ENCODE measurements at regions of chr17 and their contacts with region 1.

Region 1: DNA sequence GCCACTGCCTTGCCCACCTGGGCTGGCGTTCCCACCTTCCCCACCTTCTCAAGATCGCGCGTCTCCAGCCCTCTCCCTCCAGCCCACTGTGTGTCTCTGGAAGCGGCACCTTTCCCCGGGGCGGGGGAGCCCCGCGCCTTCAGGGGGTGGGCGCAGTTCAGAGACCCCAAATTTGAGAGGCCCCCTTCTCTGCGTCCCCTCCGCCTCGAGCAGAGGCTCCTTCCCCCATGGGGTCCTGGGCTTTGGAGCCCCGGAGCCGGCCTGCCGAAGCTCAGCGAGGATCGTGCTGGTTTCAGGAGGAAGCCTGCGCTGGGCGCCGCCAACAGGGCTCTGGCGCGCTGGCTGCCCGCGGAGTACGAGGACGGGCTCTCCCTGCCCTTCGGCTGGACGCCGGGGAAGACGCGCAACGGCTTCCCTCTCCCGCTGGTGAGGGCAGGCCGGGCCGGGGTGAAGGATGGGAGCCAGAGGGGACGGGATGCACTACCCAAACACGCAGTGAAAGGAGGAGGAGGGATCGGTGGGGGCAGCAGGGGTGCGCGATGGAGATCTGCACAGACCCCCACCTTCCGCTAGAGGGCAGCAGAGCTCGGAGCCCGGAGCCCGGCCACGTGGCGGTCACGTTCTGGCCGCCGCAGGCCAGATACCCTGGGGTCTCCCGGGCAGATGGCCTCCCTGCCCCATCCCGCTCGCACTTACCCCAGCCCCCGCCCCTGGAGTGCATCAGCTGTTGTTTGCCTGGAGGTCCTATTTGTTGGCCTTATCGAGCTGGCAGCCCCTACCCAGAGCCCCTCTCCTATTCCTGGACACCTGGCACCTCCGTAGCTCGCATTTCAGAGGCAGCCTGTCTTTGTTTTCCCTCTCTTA is 11.1 kb downstream of the LPO start:
- DNase-seq: peak; percentile 87
- ATAC-seq: peak; percentile 98
- H3K4me3 ChIP-seq: peak overlapping the region in 4 of 5 experiments; percentile 60 to 66 (median 62)
- H3K4me3 Mint-ChIP-seq: peak overlapping the region; percentile 92
- H3K27ac ChIP-seq: no peak overlapping the region
- H3K27ac Mint-ChIP-seq: peak overlapping the region; percentile 68
- H3K4me1 ChIP-seq: peaks cover 14 to 18% of the 10 kb centered on the region in 2 donors
- H3K4me1 Mint-ChIP-seq: peaks cover 19% of the 10 kb centered on the region
- H3K27me3 ChIP-seq: peaks cover 0 to 36% (median 8%) of the 10 kb centered on the region in 4 experiments
- H3K27me3 Mint-ChIP-seq: peaks cover 17% of the 10 kb centered on the region
- CTCF ChIP-seq: peak; percentile 99

Region 2: DNA sequence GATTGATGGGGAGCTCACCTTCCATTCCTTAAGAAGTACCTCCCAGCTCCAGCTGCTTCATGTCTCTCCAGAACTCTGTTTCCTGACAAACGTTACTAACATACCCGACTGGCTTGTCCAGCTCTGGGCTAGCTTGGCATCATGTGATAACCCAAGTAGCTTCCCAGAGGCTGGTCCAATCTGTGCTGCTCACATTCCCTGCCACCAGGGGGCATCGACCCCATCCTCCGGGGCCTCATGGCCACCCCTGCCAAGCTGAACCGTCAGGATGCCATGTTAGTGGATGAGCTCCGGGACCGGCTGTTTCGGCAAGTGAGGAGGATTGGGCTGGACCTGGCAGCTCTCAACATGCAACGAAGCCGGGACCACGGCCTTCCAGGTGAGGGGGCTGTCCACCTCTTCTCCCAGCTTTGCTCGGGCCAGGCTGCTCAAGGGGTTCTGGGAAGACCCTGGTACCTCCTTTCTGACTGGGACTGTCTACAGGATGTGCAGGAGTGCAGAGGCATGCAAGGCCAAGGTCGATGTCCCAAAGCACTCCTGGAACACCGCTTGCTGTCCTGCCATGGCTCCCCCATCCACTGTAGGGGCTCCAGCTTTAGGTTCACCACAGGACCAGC is 49.4 kb before region 1 on chr17:
- CTCF ChIA-PET with region 1: interaction called, 29 read pairs
- POLR2A ChIA-PET with region 1: no interaction called
- intact Hi-C with region 1: loop called (anchors 1 kb)
- DNase-seq: peak; percentile 64
- ATAC-seq: peak; percentile 70
- H3K4me3 ChIP-seq: no peak overlapping the region
- H3K4me3 Mint-ChIP-seq: no peak overlapping the region
- H3K27ac ChIP-seq: no peak overlapping the region
- H3K27ac Mint-ChIP-seq: no peak overlapping the region
- H3K4me1 ChIP-seq: peaks cover 0 to 5% of the 10 kb centered on the region in 2 donors
- H3K4me1 Mint-ChIP-seq: peaks cover 3% of the 10 kb centered on the region
- H3K27me3 ChIP-seq: peaks cover 0 to 2% (median 0%) of the 10 kb centered on the region in 4 experiments
- H3K27me3 Mint-ChIP-seq: peaks cover 33% of the 10 kb centered on the region
- CTCF ChIP-seq: peak; percentile 77

Region 3: DNA sequence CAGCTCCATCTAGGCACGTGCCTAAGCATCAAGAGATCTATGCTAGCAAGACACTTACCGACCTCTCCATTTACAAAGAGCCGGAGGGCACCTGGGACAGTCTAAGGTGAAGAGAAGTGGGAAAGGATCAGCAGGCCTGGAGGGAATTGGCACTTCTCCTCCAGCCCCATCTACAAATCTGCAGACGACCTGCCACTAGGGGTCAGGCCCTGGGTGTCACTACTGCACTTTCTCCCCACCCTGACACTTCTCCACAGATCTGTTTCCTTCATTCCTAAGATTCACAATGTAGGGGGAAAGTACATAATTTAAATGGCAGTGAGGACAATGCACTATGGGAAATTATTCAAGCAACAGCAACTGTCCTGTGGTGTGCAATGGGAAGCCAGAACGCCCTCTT is 38.6 kb before region 1 on chr17:
- CTCF ChIA-PET with region 1: interaction called, 58 read pairs
- POLR2A ChIA-PET with region 1: no interaction called
- intact Hi-C with region 1: no loop called
- DNase-seq: no peak
- ATAC-seq: no peak
- H3K4me3 ChIP-seq: no peak overlapping the region
- H3K4me3 Mint-ChIP-seq: no peak overlapping the region
- H3K27ac ChIP-seq: no peak overlapping the region
- H3K27ac Mint-ChIP-seq: no peak overlapping the region
- H3K4me1 ChIP-seq: no peaks in the 10 kb centered on the region
- H3K4me1 Mint-ChIP-seq: peaks cover 1% of the 10 kb centered on the region
- H3K27me3 ChIP-seq: no peaks in the 10 kb centered on the region
- H3K27me3 Mint-ChIP-seq: no peaks in the 10 kb centered on the region
- CTCF ChIP-seq: no peak

Region 4: GRCh38 chr17:58219001-58219788 is 30.3 kb before region 1 on chr17 and contains the start of gene MKS1:
- CTCF ChIA-PET with region 1: interaction called, 58 read pairs
- POLR2A ChIA-PET with region 1: no interaction called
- intact Hi-C with region 1: loop called (anchors 1 kb)
- DNase-seq: peak; percentile 95
- ATAC-seq: peak; percentile 97
- H3K4me3 ChIP-seq: peak within 1 kb of the TSS; percentile 38 to 84 (median 68)
- H3K4me3 Mint-ChIP-seq: peak within 1 kb of the TSS; percentile 94
- H3K27ac ChIP-seq: peak within 1 kb of the TSS; percentile 70 to 86
- H3K27ac Mint-ChIP-seq: peak within 1 kb of the TSS; percentile 83
- H3K4me1 ChIP-seq: peaks cover 10 to 19% of the 10 kb centered on the region in 2 donors
- H3K4me1 Mint-ChIP-seq: peaks cover 34% of the 10 kb centered on the region
- H3K27me3 ChIP-seq: no peaks in the 10 kb centered on the region
- H3K27me3 Mint-ChIP-seq: peaks cover 2% of the 10 kb centered on the region
- CTCF ChIP-seq: peak; percentile 75
- total RNA-seq, gene MKS1: 16.3 and 19.6 TPM in 2 replicates

Region 5: GRCh38 chr17:58232707-58233156 is 16.8 kb before region 1 on chr17:
- CTCF ChIA-PET with region 1: interaction called, 26 read pairs
- POLR2A ChIA-PET with region 1: no interaction called
- intact Hi-C with region 1: loop called (anchors 1 kb)
- DNase-seq: peak; percentile 64
- ATAC-seq: peak; percentile 62
- H3K4me3 ChIP-seq: peak overlapping the region in 1 of 5 experiments; percentile 2
- H3K4me3 Mint-ChIP-seq: peak overlapping the region; percentile 78
- H3K27ac ChIP-seq: peak overlapping the region; percentile 69 to 81
- H3K27ac Mint-ChIP-seq: peak overlapping the region; percentile 95
- H3K4me1 ChIP-seq: peaks cover 20 to 25% of the 10 kb centered on the region in 2 donors
- H3K4me1 Mint-ChIP-seq: peaks cover 32% of the 10 kb centered on the region
- H3K27me3 ChIP-seq: peaks cover 0 to under 1% (median 0%) of the 10 kb centered on the region in 4 experiments
- H3K27me3 Mint-ChIP-seq: peaks cover 15% of the 10 kb centered on the region
- CTCF ChIP-seq: no peak

Region 6: GRCh38 chr17:58238139-58238634 is 11.3 kb before region 1 on chr17 and contains the start of gene LPO:
- CTCF ChIA-PET with region 1: interaction called, 11 read pairs
- POLR2A ChIA-PET with region 1: no interaction called
- intact Hi-C with region 1: loop called (anchors 1 kb)
- DNase-seq: no peak
- ATAC-seq: no peak
- H3K4me3 ChIP-seq: no peak within 1 kb of the TSS
- H3K4me3 Mint-ChIP-seq: no peak within 1 kb of the TSS
- H3K27ac ChIP-seq: no peak within 1 kb of the TSS
- H3K27ac Mint-ChIP-seq: no peak within 1 kb of the TSS
- H3K4me1 ChIP-seq: peaks cover 5 to 11% of the 10 kb centered on the region in 2 donors
- H3K4me1 Mint-ChIP-seq: peaks cover 15% of the 10 kb centered on the region
- H3K27me3 ChIP-seq: peaks cover 0 to 24% (median 6%) of the 10 kb centered on the region in 4 experiments
- H3K27me3 Mint-ChIP-seq: peaks cover 46% of the 10 kb centered on the region
- CTCF ChIP-seq: no peak
- total RNA-seq, gene LPO: not detected in 2 replicates

Region 7: DNA sequence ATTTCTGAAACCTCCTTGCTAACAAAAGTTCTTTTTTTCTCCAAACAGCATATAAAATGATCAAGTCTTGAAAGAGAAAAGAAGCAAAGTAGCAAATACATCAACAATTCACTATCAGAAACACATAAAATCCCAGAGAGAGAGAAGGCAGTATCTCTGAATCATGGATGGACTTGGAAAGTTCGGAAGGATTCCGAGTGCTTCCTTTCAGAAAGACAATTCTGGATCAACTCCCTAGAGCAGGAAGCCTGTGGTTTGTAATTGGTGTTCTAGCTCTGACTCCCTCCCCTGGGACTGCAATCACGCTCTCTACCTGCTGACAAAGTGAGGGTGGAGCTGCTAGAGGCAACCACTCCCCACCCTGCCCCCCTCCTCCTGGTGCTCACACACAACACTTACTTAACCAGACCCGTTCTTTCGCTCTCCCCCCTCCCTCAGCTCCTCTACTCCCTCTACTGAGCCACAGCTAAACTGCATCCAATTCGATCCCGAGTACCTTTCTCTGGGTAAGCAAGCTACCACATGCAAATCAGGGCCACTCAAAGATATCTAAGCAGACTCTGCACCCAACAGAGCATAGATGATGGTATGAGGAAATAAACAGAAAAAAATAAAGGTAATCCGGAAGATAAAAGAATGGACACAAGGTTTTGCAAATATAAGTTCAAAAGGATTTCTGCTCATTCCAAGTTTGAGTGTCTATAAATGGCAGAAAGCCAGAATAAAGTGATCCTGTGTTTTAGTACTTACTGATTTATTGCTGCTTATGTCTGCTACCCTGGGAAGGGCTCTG is 168.0 kb after region 1 on chr17 and contains the start of gene RNF43:
- CTCF ChIA-PET with region 1: interaction called, 9 read pairs
- POLR2A ChIA-PET with region 1: no interaction called
- intact Hi-C with region 1: loop called (anchors 1 kb)
- DNase-seq: peak; percentile 96
- ATAC-seq: peak; percentile 100
- H3K4me3 ChIP-seq: peak within 1 kb of the TSS in 1 of 5 experiments; percentile 20
- H3K4me3 Mint-ChIP-seq: peak within 1 kb of the TSS; percentile 8
- H3K27ac ChIP-seq: peak within 1 kb of the TSS; percentile 61 to 65
- H3K27ac Mint-ChIP-seq: peak within 1 kb of the TSS; percentile 51
- H3K4me1 ChIP-seq: peaks cover 14 to 16% of the 10 kb centered on the region in 2 donors
- H3K4me1 Mint-ChIP-seq: peaks cover 21% of the 10 kb centered on the region
- H3K27me3 ChIP-seq: no peaks in the 10 kb centered on the region
- H3K27me3 Mint-ChIP-seq: no peaks in the 10 kb centered on the region
- CTCF ChIP-seq: peak; percentile 77
- total RNA-seq, gene RNF43: 2.5 and 3.2 TPM in 2 replicates